HEK293 (cell line): ENCODE measurements at regions of chr20 and their contacts with region 1.

Region 1: DNA sequence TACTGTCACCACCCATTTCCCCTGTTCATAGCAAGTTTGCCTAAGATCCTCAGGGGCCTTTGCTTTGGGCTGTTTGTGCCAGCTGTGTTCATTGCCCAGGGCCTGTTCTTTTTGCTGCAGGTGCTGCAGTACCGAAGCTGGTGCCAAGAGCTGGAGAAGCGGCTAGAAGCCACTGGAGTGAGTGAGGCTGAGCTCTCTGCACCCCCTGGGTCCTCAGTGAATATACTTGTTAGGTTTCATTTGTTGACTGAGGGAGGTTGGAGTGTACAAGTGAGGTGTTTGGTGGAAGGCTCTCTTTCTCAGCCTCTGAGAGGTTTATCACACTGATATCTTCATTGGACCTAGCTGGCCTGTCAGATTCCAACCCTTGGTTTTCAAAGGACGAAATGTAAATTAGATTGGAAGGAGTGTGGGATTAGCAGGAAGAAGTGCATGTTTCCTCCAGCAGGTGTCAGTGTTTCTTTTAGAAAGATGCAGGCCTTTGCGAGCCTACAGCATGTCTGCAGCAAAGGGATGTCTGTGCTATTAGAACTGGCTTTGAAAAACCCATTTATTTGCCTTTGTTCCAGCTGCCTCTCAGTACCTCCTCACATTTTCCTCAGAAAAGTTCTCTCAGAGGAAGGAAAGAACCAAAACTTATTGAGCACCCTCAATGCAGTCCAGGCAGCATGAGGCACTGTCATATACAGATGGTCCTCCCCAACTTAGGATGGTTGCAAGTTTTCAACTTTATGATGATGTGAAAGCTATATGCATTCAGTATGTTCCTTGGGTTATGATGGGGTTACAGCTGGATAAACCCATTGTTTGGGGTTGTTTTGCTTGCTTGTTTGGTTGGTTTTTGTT is 8.3 kb downstream of the CEP250 start:
- H3K4me3 ChIP-seq: no peak overlapping the region
- H3K27ac ChIP-seq: no peak overlapping the region
- H3K4me1 ChIP-seq: peaks cover 5% of the 10 kb centered on the region; the same call in 1 of the 2 replicates
- CTCF ChIP-seq: peak; percentile 77

Region 2: GRCh38 chr20:35363190-35363589 is 100.5 kb before region 1 on chr20:
- CTCF ChIA-PET with region 1: no interaction called
- POLR2A ChIA-PET with region 1: no interaction called
- H3K4me3 ChIP-seq: no peak overlapping the region
- H3K27ac ChIP-seq: no peak overlapping the region
- H3K4me1 ChIP-seq: no peaks in the 10 kb centered on the region
- CTCF ChIP-seq: no peak

Region 3: GRCh38 chr20:35447082-35447789 is 16.4 kb before region 1 on chr20:
- CTCF ChIA-PET with region 1: interaction called, 10 read pairs
- POLR2A ChIA-PET with region 1: no interaction called
- H3K4me3 ChIP-seq: no peak overlapping the region
- H3K27ac ChIP-seq: no peak overlapping the region
- H3K4me1 ChIP-seq: no peaks in the 10 kb centered on the region
- CTCF ChIP-seq: peak; percentile 72

Region 4: DNA sequence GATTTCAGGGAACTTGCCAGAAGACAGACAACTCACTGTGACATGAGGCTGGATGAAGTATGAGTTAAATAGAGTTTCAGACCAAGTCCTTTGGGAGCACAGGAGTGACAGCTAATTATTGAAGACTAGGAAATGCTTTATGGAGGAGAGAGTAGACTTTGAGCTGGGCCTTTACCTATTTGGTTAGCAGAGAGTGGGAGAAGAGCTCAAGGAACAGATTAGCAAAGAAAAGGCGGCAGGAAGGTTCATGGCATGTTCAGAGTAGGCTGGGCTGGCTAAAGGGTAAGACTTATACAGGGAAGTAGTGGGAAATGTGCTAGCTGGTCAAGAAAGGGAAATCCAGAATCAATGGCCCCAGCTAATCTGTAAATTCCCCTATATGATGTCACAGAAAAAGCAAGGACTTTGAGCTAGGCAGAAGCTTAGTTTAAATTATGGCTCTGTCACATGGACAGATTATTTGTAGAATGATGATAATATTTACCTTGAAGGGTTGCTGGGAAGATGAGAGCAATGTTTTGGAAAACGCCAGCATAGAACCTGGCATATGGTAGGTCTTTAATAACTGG is 10.7 kb after region 1 on chr20:
- CTCF ChIA-PET with region 1: interaction called, 10 read pairs
- POLR2A ChIA-PET with region 1: no interaction called
- H3K4me3 ChIP-seq: no peak overlapping the region
- H3K27ac ChIP-seq: no peak overlapping the region
- H3K4me1 ChIP-seq: no peaks in the 10 kb centered on the region
- CTCF ChIP-seq: no peak

Region 5: DNA sequence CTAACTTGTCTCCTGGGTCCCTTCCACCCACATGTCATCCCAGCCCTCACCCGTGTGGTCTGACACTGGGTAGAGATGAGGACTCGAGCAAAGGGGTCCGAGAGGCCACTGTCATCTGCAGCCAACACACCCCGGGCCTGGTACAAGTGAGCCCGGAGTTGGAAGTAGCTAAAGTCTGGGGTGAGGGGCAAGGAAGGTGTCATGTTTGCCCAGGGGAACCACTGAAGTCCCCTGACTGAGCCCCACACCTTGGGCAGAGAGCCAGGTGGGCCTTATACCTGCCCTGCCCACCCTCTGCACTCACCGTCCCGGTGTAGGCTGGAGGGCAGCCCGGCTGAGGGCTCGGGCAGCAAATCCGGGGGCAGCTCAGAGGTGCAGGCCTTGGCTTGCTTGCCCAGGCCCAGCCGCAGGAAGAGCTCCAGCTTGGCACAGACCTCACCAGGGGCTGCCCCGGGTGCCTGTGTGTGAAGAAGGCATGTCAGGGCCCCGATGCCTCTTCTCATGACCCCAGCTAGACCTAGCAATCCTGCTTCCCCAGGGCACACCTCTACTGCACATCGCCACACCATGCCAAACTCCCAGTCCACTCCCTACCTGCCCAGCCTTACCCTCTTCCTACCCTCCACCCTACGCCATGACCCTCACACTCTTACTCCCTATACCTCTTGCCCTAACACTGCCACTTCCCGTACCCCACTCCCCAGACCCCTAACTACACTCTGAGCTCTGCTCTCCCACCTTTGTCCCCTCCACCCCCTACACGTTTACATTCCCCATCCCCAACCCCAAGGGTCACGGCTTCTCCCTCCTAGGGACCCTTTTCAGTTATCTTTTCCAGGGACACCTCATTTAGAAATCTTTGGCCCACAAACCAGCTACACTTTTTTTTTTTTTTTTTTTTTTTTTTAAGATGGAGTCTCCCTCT is 120.2 kb after region 1 on chr20:
- CTCF ChIA-PET with region 1: no interaction called
- POLR2A ChIA-PET with region 1: no interaction called
- H3K4me3 ChIP-seq: no peak overlapping the region
- H3K27ac ChIP-seq: no peak overlapping the region
- H3K4me1 ChIP-seq: no peaks in the 10 kb centered on the region
- CTCF ChIP-seq: no peak